ENCODE measurements at regions of chr16 and their contacts with region 1.

Region 1: GRCh38 chr16:10743610-10744393 is at the start of gene NUBP1:
- DNase-seq: peak; percentile 99
- ATAC-seq: peak; percentile 96 to 97 (median 97)
- H3K4me3 ChIP-seq: peak within 1 kb of the TSS; percentile 18 to 82 (median 64)
- H3K27ac ChIP-seq: peak within 1 kb of the TSS; percentile 95 to 100 (median 98)
- H3K4me1 ChIP-seq: peaks cover 5 to 43% (median 28%) of the 10 kb centered on the region in 12 donors
- H3K27me3 ChIP-seq: no peaks in the 10 kb centered on the region
- CTCF ChIP-seq: peak in 1 of 12 donors; percentile 7
- POLR2A ChIP-seq: peak; percentile 93 to 98
- total RNA-seq, gene NUBP1: 34.0 to 54.8 (median 47.9) TPM

Region 2: GRCh38 chr16:10266809-10267208 is 477.0 kb before region 1 on chr16:
- intact Hi-C with region 1: no loop called
- DNase-seq: no peak
- ATAC-seq: no peak
- H3K4me3 ChIP-seq: no peak overlapping the region
- H3K27ac ChIP-seq: no peak overlapping the region
- H3K4me1 ChIP-seq: no peaks in the 10 kb centered on the region
- H3K27me3 ChIP-seq: peaks cover 0 to 2% (median 0%) of the 10 kb centered on the region in 9 donors
- CTCF ChIP-seq: no peak
- POLR2A ChIP-seq: no peak

Region 3: DNA sequence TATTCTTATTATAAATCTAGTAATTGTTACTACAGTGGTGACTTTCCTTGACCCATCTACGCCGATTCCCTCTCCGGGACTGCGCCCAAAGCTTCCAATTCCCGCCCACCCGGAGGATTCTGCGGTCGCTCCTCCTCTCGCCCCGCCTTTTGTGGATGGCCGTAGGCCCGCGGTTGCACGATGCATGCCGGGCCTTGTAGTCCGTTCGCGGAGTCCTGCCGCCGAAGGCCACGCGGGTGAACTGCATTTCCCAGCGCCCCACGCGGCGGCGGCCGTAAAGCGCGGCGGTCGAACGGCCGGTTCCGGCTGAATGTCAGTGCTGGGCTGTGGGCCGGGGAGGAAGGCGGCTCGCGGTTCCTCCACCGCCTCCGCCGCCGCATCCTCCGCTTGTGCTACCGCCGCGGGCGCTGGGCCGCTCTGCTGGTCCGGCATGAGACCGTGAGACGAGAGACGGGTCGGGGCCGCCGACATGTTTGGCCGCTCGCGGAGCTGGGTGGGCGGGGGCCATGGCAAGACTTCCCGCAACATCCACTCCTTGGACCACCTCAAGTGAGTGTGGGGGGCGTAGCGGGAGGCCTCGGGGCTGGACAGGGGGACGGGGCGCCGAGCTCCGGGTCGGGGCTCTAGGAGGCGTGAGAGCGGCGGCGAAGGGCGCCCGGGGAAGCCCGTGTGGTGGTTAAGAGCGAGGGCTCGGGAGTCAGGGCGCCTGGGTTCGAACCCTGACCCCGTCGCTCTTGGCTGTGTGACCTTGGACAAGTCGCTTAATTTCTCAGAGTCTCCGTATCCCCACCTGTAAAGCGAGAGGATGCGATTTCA is 200.7 kb after region 1 on chr16 and contains the start of gene CLEC16A:
- intact Hi-C with region 1: loop called in 1 of 10 experiments (anchors 2 kb)
- DNase-seq: peak; percentile 98 to 99 (median 99)
- ATAC-seq: peak; percentile 84 to 91 (median 87)
- H3K4me3 ChIP-seq: peak within 1 kb of the TSS; percentile 63 to 99 (median 89)
- H3K27ac ChIP-seq: peak within 1 kb of the TSS in 11 of 12 donors; percentile 54 to 96 (median 84)
- H3K4me1 ChIP-seq: peaks cover 8 to 64% (median 46%) of the 10 kb centered on the region in 12 donors
- H3K27me3 ChIP-seq: no peaks in the 10 kb centered on the region
- CTCF ChIP-seq: peak in 2 of 12 donors; percentile 5 to 13
- POLR2A ChIP-seq: peak; percentile 50 to 93
- total RNA-seq, gene CLEC16A: 20.3 to 41.1 (median 23.7) TPM

Region 4: DNA sequence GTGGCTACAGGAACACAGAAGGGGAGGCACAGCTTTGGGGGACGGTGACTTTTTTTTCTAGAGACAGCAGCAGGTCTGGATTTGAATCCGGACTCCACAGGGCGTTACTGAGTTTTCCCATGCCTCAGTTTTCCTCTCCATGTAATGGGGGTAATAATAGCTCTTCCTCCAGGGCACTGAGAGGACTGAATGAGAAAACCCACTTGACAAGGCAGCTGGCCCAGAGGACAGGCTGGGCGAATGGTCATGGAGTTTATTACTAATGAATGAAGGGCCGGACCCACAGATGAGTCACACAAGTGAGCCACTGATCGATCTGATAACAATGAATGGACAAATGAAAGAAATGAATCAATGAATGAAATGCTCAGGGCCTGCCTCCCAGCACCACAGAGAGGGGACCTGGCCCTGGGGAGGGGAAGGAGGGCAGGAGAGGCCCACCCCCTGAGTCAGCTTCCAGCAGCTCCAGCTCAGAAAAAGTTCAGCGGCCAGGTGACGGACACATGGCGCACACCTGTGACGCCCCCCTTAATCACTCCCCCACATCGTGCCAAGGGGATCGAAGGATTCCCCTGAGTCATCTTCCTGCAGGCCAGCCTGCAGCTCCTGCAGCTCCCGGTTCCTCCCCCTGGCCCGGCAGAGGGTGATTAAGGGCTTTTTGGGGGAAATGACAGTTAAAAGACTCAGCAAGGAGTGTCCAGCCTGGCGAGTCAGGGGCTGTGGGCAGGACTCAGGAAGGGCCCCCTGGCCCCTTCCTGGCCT is 457.9 kb after region 1 on chr16:
- intact Hi-C with region 1: no loop called
- DNase-seq: no peak
- ATAC-seq: no peak
- H3K4me3 ChIP-seq: no peak overlapping the region
- H3K27ac ChIP-seq: no peak overlapping the region
- H3K4me1 ChIP-seq: peaks cover 0 to 56% (median 0%) of the 10 kb centered on the region in 12 donors
- H3K27me3 ChIP-seq: no peaks in the 10 kb centered on the region
- CTCF ChIP-seq: no peak
- POLR2A ChIP-seq: no peak